ENCODE measurements at regions of chr20 and their contacts with region 1.

Region 1: GRCh38 chr20:20568604-20569205 is 143.7 kb downstream of the RALGAPA2 start:
- DNase-seq: no peak
- ATAC-seq: peak; percentile 66
- H3K4me3 ChIP-seq: no peak overlapping the region
- H3K27ac ChIP-seq: no peak overlapping the region
- H3K4me1 ChIP-seq: no peaks in the 10 kb centered on the region
- H3K27me3 ChIP-seq: no peaks in the 10 kb centered on the region
- CTCF ChIP-seq: peak; percentile 65 to 88 (median 69)
- EP300 ChIP-seq: no peak
- POLR2A ChIP-seq: no peak
- RAD21 ChIP-seq: peak; percentile 98

Region 2: DNA sequence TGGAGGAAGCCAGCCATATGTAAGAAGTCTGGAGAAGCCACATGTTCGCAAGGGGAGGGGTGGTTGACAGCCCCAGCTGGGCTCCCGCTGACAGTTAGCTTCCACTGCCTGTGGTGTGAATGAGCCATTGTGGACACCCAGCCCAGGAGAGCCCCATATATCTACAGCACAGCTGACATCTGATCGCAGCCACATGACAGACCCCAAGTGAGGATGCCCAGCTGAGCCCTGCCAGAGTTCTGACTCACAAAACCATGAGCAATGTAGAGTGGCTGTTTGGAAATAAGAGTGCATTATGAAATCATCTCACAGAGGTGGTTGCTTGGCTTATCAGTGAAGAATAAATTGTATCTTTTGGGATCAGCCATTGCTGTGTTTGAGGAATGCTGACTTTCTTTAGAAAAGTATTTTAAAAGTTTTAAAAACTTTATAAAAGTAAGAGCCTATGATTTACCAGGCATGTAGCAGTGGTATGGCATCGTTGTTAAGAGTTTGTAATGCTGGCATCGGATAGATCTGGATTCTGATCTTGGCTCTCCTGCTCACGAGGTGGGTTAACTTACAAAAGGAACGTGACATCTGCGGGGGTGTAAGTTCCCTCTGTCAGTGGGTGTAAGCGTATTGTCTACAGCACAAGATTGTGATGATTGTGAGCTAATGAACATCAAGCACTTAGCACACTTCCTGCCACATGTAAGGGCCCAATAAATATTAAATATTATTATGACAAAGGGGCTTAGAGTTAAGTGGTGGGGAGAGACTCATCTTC is 492.2 kb before region 1 on chr20:
- CTCF ChIA-PET with region 1: no interaction called
- POLR2A ChIA-PET with region 1: no interaction called
- RAD21 ChIA-PET with region 1: no interaction called
- SMC1A ChIA-PET with region 1: no interaction called
- in situ Hi-C with region 1: loop called (anchors 5 kb)
- intact Hi-C with region 1: no loop called
- DNase-seq: no peak
- ATAC-seq: no peak
- H3K4me3 ChIP-seq: no peak overlapping the region
- H3K27ac ChIP-seq: no peak overlapping the region
- H3K4me1 ChIP-seq: no peaks in the 10 kb centered on the region
- H3K27me3 ChIP-seq: peaks cover 0 to 1% of the 10 kb centered on the region in 2 experiments; a peak in 1 of 4 replicates
- CTCF ChIP-seq: no peak
- EP300 ChIP-seq: no peak
- POLR2A ChIP-seq: no peak
- RAD21 ChIP-seq: no peak

Region 3: DNA sequence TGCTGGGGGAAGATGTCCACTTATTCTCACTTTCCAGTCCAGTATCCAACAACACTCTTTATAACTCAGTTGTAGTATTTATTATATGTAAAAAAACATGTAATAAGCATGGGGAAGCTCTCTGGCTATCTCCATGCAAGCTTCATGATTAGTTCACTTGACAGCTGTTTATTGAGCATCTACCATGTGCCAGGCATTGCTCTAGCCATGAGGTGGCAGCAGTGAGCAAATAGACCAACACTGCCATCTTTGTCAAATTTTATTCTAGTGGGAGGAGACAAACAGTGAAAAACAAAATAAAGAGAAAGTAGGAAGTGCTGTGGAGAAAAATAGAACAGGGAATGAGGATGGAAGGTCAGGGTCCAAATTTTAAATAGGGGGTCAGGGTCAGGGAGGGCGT is 384.6 kb before region 1 on chr20:
- CTCF ChIA-PET with region 1: no interaction called
- POLR2A ChIA-PET with region 1: no interaction called
- RAD21 ChIA-PET with region 1: no interaction called
- SMC1A ChIA-PET with region 1: no interaction called
- in situ Hi-C with region 1: no loop called
- intact Hi-C with region 1: loop called (anchors 5 kb)
- DNase-seq: no peak
- ATAC-seq: peak; percentile 38; the same call in 1 of the 3 replicates
- H3K4me3 ChIP-seq: no peak overlapping the region
- H3K27ac ChIP-seq: no peak overlapping the region
- H3K4me1 ChIP-seq: peaks cover 3% of the 10 kb centered on the region; the same call in 1 of the 2 replicates
- H3K27me3 ChIP-seq: no peaks in the 10 kb centered on the region
- CTCF ChIP-seq: peak; percentile 20 to 60 (median 36); a peak in 4 of 6 replicates
- EP300 ChIP-seq: no peak
- POLR2A ChIP-seq: no peak
- RAD21 ChIP-seq: peak; percentile 33; the same call in 1 of the 2 replicates

Region 4: DNA sequence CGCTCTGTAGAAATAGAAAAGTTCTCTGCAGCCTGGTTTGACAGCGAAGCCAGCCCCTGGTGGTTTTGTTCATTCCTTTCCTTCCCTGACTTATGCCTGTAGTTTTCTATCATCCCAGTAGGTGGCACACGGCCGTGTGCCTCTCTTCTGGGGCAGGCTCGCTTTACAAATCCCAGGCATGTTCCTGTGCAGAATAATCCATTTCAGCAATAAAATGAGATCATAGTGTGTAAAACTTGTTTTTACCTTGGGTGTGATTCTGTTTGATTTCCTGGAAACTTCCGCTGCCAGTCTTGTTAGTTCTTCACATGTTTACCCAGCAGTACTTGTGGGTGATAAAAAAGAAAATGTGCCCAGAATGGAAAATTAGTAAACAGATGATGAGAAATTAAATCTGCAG is 208.2 kb before region 1 on chr20:
- CTCF ChIA-PET with region 1: interaction called, 18 read pairs
- POLR2A ChIA-PET with region 1: no interaction called
- RAD21 ChIA-PET with region 1: interaction called, 6 read pairs
- SMC1A ChIA-PET with region 1: interaction called, 6 read pairs
- in situ Hi-C with region 1: loop called (anchors 5 kb)
- intact Hi-C with region 1: loop called (anchors 1 kb)
- DNase-seq: no peak
- ATAC-seq: peak; percentile 86
- H3K4me3 ChIP-seq: no peak overlapping the region
- H3K27ac ChIP-seq: no peak overlapping the region
- H3K4me1 ChIP-seq: no peaks in the 10 kb centered on the region
- H3K27me3 ChIP-seq: peaks cover 16 to 28% of the 10 kb centered on the region in 2 experiments
- CTCF ChIP-seq: peak; percentile 69 to 84 (median 78)
- EP300 ChIP-seq: no peak
- POLR2A ChIP-seq: no peak
- RAD21 ChIP-seq: peak; percentile 77

Region 5: GRCh38 chr20:20440886-20441654 is 127.6 kb before region 1 on chr20:
- CTCF ChIA-PET with region 1: interaction called, 4 read pairs
- POLR2A ChIA-PET with region 1: no interaction called
- RAD21 ChIA-PET with region 1: no interaction called
- SMC1A ChIA-PET with region 1: interaction called, 4 read pairs
- in situ Hi-C with region 1: no loop called
- intact Hi-C with region 1: loop called (anchors 10 kb)
- DNase-seq: no peak
- ATAC-seq: peak; percentile 56
- H3K4me3 ChIP-seq: no peak overlapping the region
- H3K27ac ChIP-seq: no peak overlapping the region
- H3K4me1 ChIP-seq: peaks cover 5% of the 10 kb centered on the region; the same call in 1 of the 2 replicates
- H3K27me3 ChIP-seq: no peaks in the 10 kb centered on the region
- CTCF ChIP-seq: no peak
- EP300 ChIP-seq: peak in 1 of 2 experiments; percentile 24; a peak in 1 of 4 replicates
- POLR2A ChIP-seq: no peak
- RAD21 ChIP-seq: no peak

Region 6: GRCh38 chr20:20466341-20466879 is 102.3 kb before region 1 on chr20:
- CTCF ChIA-PET with region 1: interaction called, 11 read pairs
- POLR2A ChIA-PET with region 1: no interaction called
- RAD21 ChIA-PET with region 1: interaction called, 4 read pairs
- SMC1A ChIA-PET with region 1: interaction called, 14 read pairs
- in situ Hi-C with region 1: no loop called
- intact Hi-C with region 1: loop called (anchors 5 kb)
- DNase-seq: peak; percentile 92
- ATAC-seq: peak; percentile 87
- H3K4me3 ChIP-seq: no peak overlapping the region
- H3K27ac ChIP-seq: peak overlapping the region; percentile 86
- H3K4me1 ChIP-seq: peaks cover 36% of the 10 kb centered on the region
- H3K27me3 ChIP-seq: no peaks in the 10 kb centered on the region
- CTCF ChIP-seq: no peak
- EP300 ChIP-seq: peak; percentile 77; a peak in 3 of 4 replicates
- POLR2A ChIP-seq: peak; percentile 61
- RAD21 ChIP-seq: no peak

Region 7: GRCh38 chr20:20624914-20625313 is 56.2 kb after region 1 on chr20:
- CTCF ChIA-PET with region 1: no interaction called
- POLR2A ChIA-PET with region 1: no interaction called
- RAD21 ChIA-PET with region 1: no interaction called
- SMC1A ChIA-PET with region 1: no interaction called
- in situ Hi-C with region 1: no loop called
- intact Hi-C with region 1: no loop called
- DNase-seq: no peak
- ATAC-seq: no peak
- H3K4me3 ChIP-seq: no peak overlapping the region
- H3K27ac ChIP-seq: no peak overlapping the region
- H3K4me1 ChIP-seq: no peaks in the 10 kb centered on the region
- H3K27me3 ChIP-seq: no peaks in the 10 kb centered on the region
- CTCF ChIP-seq: no peak
- EP300 ChIP-seq: no peak
- POLR2A ChIP-seq: no peak
- RAD21 ChIP-seq: no peak

Measured in GM12878 (cell line).